Activated T-helper 1 cell treated with anti-CD3 and anti-CD28 coated beads, Interleukin-12 subunit alpha, Interleukin-12 subunit beta, Interleukin-2, Interleukin-4 antibody, amounts not matched to agents 30 ng/mL and 10 ng/mL and 1 ng/mL, durations not matched to agents 14 hours and 24 hours and 36 hours (primary cell): ENCODE measurements at regions of chr5 and their contacts with region 1.

Region 1: DNA sequence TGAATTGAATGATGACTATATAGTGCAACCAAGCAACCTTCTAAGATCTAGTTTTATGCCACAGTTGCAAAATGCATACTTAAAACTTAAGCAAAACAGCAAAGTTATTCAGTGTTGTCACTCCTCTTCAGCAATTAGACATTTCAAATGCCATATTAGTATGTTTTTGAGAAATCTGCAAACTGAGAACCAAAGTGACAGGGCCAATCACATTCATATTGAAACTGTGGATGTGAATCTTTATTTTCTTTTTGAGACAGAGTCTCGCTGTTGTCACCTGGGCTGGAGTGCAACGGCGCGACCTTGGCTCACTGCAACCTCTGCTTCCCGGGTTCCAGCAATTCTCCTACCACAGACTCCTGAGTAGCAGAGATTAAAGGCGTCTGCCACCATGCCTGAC is 249.2 kb upstream of the EFNA5 start:
- DNase-seq: no peak
- H3K4me3 Mint-ChIP-seq: no peak overlapping the region
- H3K27ac Mint-ChIP-seq: peak overlapping the region; percentile 25
- H3K4me1 Mint-ChIP-seq: peaks cover 48% of the 10 kb centered on the region
- H3K27me3 Mint-ChIP-seq: no peaks in the 10 kb centered on the region

Region 2: DNA sequence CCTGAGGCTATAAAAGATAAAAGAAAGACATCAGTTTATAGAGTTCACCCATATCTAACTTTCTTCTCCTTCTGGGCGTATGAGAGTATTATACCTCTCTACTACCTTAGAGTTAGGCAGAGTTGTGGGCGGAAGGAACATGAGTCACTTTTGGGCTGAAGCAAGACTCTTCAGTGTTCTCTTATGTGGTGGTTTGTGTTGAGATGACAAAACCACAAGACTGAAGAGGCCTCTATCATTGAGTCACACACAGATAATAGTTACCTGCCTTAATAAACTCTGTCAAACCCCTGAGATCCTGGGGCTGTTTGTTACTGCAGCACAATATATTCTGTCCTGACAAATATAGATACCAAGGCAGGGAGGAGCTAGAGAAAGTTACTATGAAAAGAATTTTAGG is 433.5 kb before region 1 on chr5:
- intact Hi-C with region 1: loop called (anchors 10 kb)
- DNase-seq: peak; percentile 29
- H3K4me3 Mint-ChIP-seq: no peak overlapping the region
- H3K27ac Mint-ChIP-seq: no peak overlapping the region
- H3K4me1 Mint-ChIP-seq: peaks cover 21% of the 10 kb centered on the region
- H3K27me3 Mint-ChIP-seq: peaks cover 11% of the 10 kb centered on the region

Region 3: DNA sequence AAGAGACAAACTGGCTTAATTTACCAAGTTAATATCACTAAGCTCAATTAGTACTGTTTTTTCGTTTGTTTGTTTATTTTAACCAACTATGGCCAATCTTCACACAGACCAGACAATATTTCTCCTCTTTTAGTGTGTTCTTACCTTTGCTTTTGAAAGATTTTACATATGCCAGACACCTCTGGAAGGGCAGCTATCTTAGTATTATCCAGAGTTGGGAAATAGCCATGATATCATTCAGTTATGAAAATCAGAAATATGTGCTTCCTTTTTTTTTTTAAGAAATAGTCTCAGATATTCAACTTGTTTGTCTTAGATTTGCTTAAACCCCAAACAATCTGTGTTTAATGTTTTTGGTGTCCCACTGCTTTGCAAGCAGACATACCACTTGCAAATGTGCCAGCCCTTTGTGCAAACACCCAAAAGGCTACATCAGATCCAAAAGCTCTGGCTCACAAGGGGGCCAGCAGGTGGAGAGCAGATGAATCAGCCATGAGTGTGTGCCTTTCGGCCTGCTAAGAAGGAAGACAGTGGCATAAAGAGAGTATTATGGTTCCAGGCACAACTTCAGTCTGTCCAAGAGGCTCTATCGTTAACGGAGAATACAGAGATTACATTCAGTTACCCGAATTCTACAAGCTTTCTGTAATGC is 396.8 kb before region 1 on chr5:
- intact Hi-C with region 1: no loop called
- DNase-seq: no peak
- H3K4me3 Mint-ChIP-seq: no peak overlapping the region
- H3K27ac Mint-ChIP-seq: no peak overlapping the region
- H3K4me1 Mint-ChIP-seq: no peaks in the 10 kb centered on the region
- H3K27me3 Mint-ChIP-seq: peaks cover 12% of the 10 kb centered on the region

Region 4: GRCh38 chr5:107673368-107674136 is 246.4 kb before region 1 on chr5:
- intact Hi-C with region 1: loop called (anchors 5 kb)
- DNase-seq: peak; percentile 44
- H3K4me3 Mint-ChIP-seq: peak overlapping the region; percentile 68
- H3K27ac Mint-ChIP-seq: peak overlapping the region; percentile 32
- H3K4me1 Mint-ChIP-seq: peaks cover 22% of the 10 kb centered on the region
- H3K27me3 Mint-ChIP-seq: peaks cover 63% of the 10 kb centered on the region

Region 5: DNA sequence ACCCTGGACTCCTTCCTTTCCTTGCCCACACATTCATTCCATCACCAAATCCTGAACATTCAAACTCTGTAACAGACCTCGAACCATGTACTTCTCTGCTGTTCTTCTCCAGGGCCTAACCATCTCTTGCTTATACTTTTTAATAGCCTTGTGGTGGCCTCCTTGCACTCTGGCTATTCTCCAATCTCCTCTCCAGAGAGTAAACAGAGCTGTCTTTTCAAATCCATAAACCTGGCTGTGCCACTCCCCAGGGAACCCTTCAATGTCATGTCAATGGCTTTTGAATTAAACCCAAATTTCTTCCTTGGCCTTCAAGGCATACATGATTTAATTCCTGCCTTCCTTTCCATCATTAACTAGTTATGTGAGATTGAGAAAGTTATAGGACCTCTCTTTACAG is 28.4 kb after region 1 on chr5:
- intact Hi-C with region 1: no loop called
- DNase-seq: no peak
- H3K4me3 Mint-ChIP-seq: no peak overlapping the region
- H3K27ac Mint-ChIP-seq: no peak overlapping the region
- H3K4me1 Mint-ChIP-seq: peaks cover 12% of the 10 kb centered on the region
- H3K27me3 Mint-ChIP-seq: no peaks in the 10 kb centered on the region

Region 6: GRCh38 chr5:108003178-108003577 is 83.2 kb after region 1 on chr5:
- intact Hi-C with region 1: loop called (anchors 5 kb)
- DNase-seq: peak; percentile 11
- H3K4me3 Mint-ChIP-seq: peak overlapping the region; percentile 35
- H3K27ac Mint-ChIP-seq: peak overlapping the region; percentile 36
- H3K4me1 Mint-ChIP-seq: peaks cover 14% of the 10 kb centered on the region
- H3K27me3 Mint-ChIP-seq: no peaks in the 10 kb centered on the region